CD4-positive, alpha-beta memory T cell (primary cell): ENCODE measurements at regions of chr1 and their contacts with region 1.

Region 1: GRCh38 chr1:205354259-205354904 is 2.3 kb downstream of the KLHDC8A start:
- DNase-seq: peak; percentile 57 to 70 (median 62)
- H3K4me3 ChIP-seq: no peak overlapping the region
- H3K4me3 Mint-ChIP-seq: no peak overlapping the region
- H3K27ac ChIP-seq: no peak overlapping the region
- H3K27ac Mint-ChIP-seq: no peak overlapping the region
- H3K4me1 ChIP-seq: no peaks in the 10 kb centered on the region
- H3K4me1 Mint-ChIP-seq: no peaks in the 10 kb centered on the region
- H3K27me3 ChIP-seq: peaks cover 4% of the 10 kb centered on the region
- H3K27me3 Mint-ChIP-seq: peaks cover 12 to 16% of the 10 kb centered on the region in 2 donors

Region 2: DNA sequence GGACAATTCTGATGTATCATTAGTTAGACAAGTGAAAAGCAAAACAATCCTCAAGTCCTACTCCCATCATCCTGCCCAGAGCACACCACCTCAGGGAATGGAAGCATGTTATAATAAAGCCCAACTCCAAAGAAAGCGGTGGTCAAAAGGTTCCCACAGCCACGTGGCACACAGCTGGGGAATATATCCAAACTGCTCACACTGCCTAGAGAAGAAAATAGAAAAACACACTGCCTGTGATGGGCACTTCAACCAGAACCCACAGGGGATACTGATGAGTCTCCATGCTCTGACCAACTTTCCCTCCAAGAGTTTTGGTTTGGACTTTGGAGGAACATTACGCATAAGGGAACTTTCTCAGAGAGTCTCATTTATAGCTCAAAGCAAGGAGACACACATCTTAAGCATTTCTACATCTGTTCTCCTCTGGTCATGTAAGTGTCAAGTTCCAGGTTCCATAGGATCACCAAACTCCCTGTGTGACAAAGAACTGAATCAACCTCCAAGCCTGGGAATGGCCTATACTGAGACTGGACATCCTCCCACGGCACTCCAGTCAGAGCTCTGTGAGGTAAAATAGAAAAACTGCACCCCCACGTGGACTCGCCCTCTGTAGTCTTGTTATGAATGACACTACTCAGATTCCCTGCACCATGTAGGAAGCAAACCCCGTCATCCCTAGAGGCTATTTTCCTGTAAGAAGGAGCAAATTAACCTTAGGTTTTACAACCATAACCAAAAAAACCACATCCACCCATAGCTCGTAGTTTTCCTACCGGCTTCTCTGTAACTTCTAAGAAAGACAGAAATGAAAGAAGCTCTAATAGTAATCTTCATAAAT is 155.1 kb before region 1 on chr1:
- CTCF ChIA-PET with region 1: no interaction called
- POLR2A ChIA-PET with region 1: no interaction called
- intact Hi-C with region 1: no loop called
- DNase-seq: peak in 1 of 5 donors; percentile 7
- H3K4me3 ChIP-seq: no peak overlapping the region
- H3K4me3 Mint-ChIP-seq: peak overlapping the region; percentile 1 to 83 (median 56)
- H3K27ac ChIP-seq: no peak overlapping the region
- H3K27ac Mint-ChIP-seq: peak overlapping the region in 6 of 7 donors; percentile 41 to 73 (median 67)
- H3K4me1 ChIP-seq: peaks cover 27% of the 10 kb centered on the region
- H3K4me1 Mint-ChIP-seq: peaks cover 32 to 60% (median 46%) of the 10 kb centered on the region in 4 donors
- H3K27me3 ChIP-seq: no peaks in the 10 kb centered on the region
- H3K27me3 Mint-ChIP-seq: no peaks in the 10 kb centered on the region

Region 3: DNA sequence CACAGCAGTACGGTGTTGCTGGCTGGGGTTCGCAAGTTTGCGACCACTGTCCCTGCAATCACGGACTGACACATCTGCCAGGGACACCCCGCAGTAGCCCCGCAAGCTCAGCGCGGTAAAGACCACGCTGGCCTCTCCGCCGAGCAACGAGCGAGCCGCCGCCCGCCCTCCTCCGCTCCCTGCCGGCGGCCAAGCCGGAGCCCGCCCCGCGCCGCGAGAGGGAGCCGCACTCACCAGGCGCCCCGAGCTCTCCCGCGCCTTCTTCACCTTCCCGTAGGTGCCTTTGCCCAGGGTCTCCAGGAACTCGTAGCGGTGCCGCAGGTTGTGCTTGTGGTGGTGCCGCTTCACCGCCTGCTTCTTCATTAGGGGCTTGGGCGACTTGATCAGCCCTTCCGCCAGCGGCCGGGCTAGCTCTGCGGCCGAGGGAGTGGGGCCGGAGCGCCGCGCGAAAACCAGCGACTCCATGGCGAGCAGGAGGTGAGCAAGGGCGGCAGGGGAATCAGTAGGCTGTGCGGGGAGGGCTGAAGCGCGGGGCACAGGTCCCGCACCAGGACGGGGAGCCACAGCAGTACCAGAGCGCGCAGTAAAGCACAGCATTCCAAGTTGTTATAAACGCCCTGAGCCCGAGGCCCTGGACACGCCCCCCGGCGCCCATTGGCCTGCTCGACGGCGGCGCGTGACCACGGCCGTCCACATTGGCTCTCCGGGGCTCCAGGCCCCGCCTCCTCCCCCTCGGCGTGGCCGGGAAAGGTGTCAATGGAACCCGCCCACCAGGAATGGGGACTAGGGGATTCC is 33.0 kb before region 1 on chr1 and contains the start of gene NUAK2:
- CTCF ChIA-PET with region 1: interaction called, 33 read pairs
- POLR2A ChIA-PET with region 1: no interaction called
- intact Hi-C with region 1: no loop called
- DNase-seq: peak; percentile 80 to 83 (median 81)
- H3K4me3 ChIP-seq: peak within 1 kb of the TSS; percentile 79 to 99
- H3K4me3 Mint-ChIP-seq: peak within 1 kb of the TSS; percentile 95 to 100 (median 98)
- H3K27ac ChIP-seq: peak within 1 kb of the TSS; percentile 74
- H3K27ac Mint-ChIP-seq: peak within 1 kb of the TSS; percentile 83 to 97 (median 90)
- H3K4me1 ChIP-seq: peaks cover 56% of the 10 kb centered on the region
- H3K4me1 Mint-ChIP-seq: peaks cover 49 to 80% (median 68%) of the 10 kb centered on the region in 4 donors
- H3K27me3 ChIP-seq: no peaks in the 10 kb centered on the region
- H3K27me3 Mint-ChIP-seq: no peaks in the 10 kb centered on the region
- total RNA-seq, gene NUAK2: 32.5 to 32.8 TPM

Region 4: DNA sequence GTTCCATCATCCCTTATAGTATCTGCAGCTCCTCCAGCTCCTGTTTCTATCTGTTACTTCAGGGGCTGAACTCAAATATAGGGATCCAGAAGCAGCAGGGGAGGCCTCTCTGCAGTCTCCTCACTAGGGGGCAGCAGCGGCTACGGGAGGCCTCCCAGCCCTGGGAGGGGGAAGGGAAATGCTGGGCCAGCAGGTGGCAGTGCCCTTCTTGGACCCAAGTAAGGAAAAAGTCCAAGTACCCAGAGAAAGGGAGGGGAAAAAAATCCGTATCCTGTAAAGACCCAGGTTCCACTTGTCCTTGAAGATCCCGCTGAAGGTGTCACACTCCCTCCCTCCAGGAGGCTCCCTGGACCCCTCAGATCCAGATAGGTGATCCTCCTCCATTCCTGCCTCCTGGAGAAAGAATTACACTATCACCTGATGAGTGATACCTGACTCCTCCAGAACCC is 18.7 kb before region 1 on chr1:
- CTCF ChIA-PET with region 1: interaction called, 21 read pairs
- POLR2A ChIA-PET with region 1: interaction called, 3 read pairs
- intact Hi-C with region 1: no loop called
- DNase-seq: peak; percentile 68 to 72 (median 70)
- H3K4me3 ChIP-seq: no peak overlapping the region
- H3K4me3 Mint-ChIP-seq: no peak overlapping the region
- H3K27ac ChIP-seq: no peak overlapping the region
- H3K27ac Mint-ChIP-seq: no peak overlapping the region
- H3K4me1 ChIP-seq: no peaks in the 10 kb centered on the region
- H3K4me1 Mint-ChIP-seq: peaks cover 0 to 2% (median 0%) of the 10 kb centered on the region in 4 donors
- H3K27me3 ChIP-seq: no peaks in the 10 kb centered on the region
- H3K27me3 Mint-ChIP-seq: peaks cover 0 to 2% of the 10 kb centered on the region in 2 donors

Region 5: GRCh38 chr1:205365945-205366463 is 11.6 kb after region 1 on chr1:
- CTCF ChIA-PET with region 1: interaction called, 13 read pairs
- POLR2A ChIA-PET with region 1: no interaction called
- intact Hi-C with region 1: no loop called
- DNase-seq: no peak
- H3K4me3 ChIP-seq: no peak overlapping the region
- H3K4me3 Mint-ChIP-seq: no peak overlapping the region
- H3K27ac ChIP-seq: no peak overlapping the region
- H3K27ac Mint-ChIP-seq: no peak overlapping the region
- H3K4me1 ChIP-seq: no peaks in the 10 kb centered on the region
- H3K4me1 Mint-ChIP-seq: no peaks in the 10 kb centered on the region
- H3K27me3 ChIP-seq: no peaks in the 10 kb centered on the region
- H3K27me3 Mint-ChIP-seq: peaks cover 0 to 8% of the 10 kb centered on the region in 2 donors

Region 6: DNA sequence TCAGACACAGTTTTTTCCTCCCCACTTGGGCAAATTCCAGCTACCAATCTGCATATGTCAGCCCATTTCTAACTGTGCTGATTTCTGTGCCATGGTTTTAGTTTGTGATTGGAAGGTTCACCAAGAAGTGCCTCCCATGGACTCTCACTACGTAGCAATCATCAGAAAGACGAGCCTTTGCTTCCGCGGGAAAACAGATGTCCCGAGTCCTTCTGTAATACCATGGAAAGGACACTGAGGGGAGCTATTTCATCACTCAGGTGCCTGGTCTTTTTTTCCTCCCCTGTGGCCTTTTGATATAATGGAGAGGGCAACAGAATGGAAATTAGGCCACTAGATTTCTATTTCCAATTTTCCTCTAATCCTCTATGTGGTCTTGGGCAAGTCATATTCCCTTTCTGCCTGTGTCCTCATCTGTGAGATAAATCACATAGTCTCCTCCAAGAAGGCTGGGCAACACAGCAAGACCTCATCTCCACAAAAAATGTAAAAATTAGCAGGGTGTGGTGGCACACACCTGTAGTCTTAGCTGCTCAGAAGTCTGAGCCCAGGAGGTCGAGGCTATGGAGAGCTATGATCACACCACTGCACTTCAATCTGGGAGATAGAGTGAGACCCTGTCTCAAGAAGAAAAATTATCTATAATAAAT is 42.7 kb after region 1 on chr1:
- CTCF ChIA-PET with region 1: interaction called, 21 read pairs
- POLR2A ChIA-PET with region 1: no interaction called
- intact Hi-C with region 1: loop called (anchors 1 kb)
- DNase-seq: peak in 4 of 5 donors; percentile 38 to 46 (median 42)
- H3K4me3 ChIP-seq: no peak overlapping the region
- H3K4me3 Mint-ChIP-seq: no peak overlapping the region
- H3K27ac ChIP-seq: no peak overlapping the region
- H3K27ac Mint-ChIP-seq: peak overlapping the region in 1 of 7 donors; percentile 14
- H3K4me1 ChIP-seq: no peaks in the 10 kb centered on the region
- H3K4me1 Mint-ChIP-seq: peaks cover 2 to 9% (median 5%) of the 10 kb centered on the region in 4 donors
- H3K27me3 ChIP-seq: no peaks in the 10 kb centered on the region
- H3K27me3 Mint-ChIP-seq: peaks cover 2 to 10% of the 10 kb centered on the region in 2 donors

Region 7: GRCh38 chr1:205430696-205431305 is 76.4 kb after region 1 on chr1:
- CTCF ChIA-PET with region 1: interaction called, 16 read pairs
- POLR2A ChIA-PET with region 1: no interaction called
- intact Hi-C with region 1: loop called (anchors 1 kb)
- DNase-seq: peak; percentile 46 to 69 (median 53)
- H3K4me3 ChIP-seq: peak overlapping the region; percentile 41 to 55
- H3K4me3 Mint-ChIP-seq: peak overlapping the region; percentile 81 to 91 (median 84)
- H3K27ac ChIP-seq: no peak overlapping the region
- H3K27ac Mint-ChIP-seq: peak overlapping the region in 5 of 7 donors; percentile 34 to 83 (median 59)
- H3K4me1 ChIP-seq: peaks cover 10% of the 10 kb centered on the region
- H3K4me1 Mint-ChIP-seq: peaks cover 8 to 17% (median 13%) of the 10 kb centered on the region in 4 donors
- H3K27me3 ChIP-seq: no peaks in the 10 kb centered on the region
- H3K27me3 Mint-ChIP-seq: peaks cover 10 to 11% of the 10 kb centered on the region in 2 donors